ENCODE measurements at regions of chr3 and their contacts with region 1.

Region 1: GRCh38 chr3:133941415-133941821 is 45.7 kb upstream of the RAB6B start:
- DNase-seq: no peak
- H3K4me3 Mint-ChIP-seq: no peak overlapping the region
- H3K27ac Mint-ChIP-seq: no peak overlapping the region
- H3K4me1 Mint-ChIP-seq: peaks cover 20% of the 10 kb centered on the region
- H3K27me3 Mint-ChIP-seq: peaks cover 4% of the 10 kb centered on the region

Region 2: DNA sequence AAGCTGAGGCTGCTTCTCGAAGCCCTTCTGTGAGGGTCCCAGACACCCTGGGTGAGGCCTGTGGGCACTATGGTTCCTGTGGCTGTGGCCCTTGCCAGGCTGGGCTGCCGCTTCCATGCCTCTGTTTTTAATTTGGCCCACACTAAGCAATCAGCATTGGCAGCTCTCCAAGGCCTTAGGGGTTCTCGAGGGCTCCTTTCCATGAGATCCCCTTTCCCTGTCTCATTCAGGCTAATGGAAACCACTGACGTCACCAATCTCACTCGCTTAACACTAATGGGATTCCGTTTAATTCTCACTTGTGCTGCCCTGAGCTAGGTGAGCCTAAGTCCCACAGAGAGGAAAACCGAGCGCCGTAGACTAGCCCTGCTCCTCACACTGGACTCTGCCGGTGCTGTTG is 14.5 kb after region 1 on chr3:
- CTCF ChIA-PET with region 1: no interaction called
- POLR2A ChIA-PET with region 1: no interaction called
- DNase-seq: no peak
- H3K4me3 Mint-ChIP-seq: no peak overlapping the region
- H3K27ac Mint-ChIP-seq: no peak overlapping the region
- H3K4me1 Mint-ChIP-seq: no peaks in the 10 kb centered on the region
- H3K27me3 Mint-ChIP-seq: no peaks in the 10 kb centered on the region

Region 3: GRCh38 chr3:134059671-134060560 is 118.5 kb after region 1 on chr3:
- CTCF ChIA-PET with region 1: no interaction called
- POLR2A ChIA-PET with region 1: interaction called, 10 read pairs
- DNase-seq: no peak
- H3K4me3 Mint-ChIP-seq: no peak overlapping the region
- H3K27ac Mint-ChIP-seq: no peak overlapping the region
- H3K4me1 Mint-ChIP-seq: peaks cover 13% of the 10 kb centered on the region
- H3K27me3 Mint-ChIP-seq: no peaks in the 10 kb centered on the region

Region 4: DNA sequence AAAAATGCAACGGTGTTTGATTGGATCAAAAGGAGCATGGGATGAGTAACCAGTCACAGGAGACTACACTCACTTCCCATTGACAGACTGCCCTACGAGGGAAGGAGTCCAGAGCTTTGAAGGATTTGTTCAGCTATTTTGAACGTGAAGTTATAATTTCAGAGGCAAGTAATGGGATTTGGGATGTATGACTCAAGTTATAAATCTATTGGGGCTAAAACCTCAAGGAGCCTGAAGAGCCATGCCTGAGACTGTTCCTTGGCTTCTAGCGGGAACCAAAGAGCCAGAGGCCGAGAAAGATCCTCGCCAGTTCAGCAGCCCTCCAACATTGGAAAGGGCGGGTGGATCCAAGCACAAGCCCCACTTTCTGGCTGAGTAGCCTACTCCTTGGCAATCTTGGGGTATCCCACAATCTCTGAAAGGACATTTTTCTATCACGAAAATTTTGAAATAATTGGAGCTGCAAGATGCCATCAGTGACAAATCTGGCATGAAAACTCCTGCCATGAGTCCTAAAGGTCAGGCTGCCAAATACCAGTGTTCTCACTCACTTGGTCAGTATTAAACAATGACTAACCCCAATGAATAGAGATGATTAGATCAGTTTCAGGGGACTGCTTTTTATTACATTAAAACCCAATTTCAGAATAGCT is 136.9 kb after region 1 on chr3:
- CTCF ChIA-PET with region 1: no interaction called
- POLR2A ChIA-PET with region 1: no interaction called
- DNase-seq: no peak
- H3K4me3 Mint-ChIP-seq: no peak overlapping the region
- H3K27ac Mint-ChIP-seq: no peak overlapping the region
- H3K4me1 Mint-ChIP-seq: no peaks in the 10 kb centered on the region
- H3K27me3 Mint-ChIP-seq: peaks cover 6% of the 10 kb centered on the region

Measured in activated CD4-positive, alpha-beta T cell treated with anti-CD3 and anti-CD28 coated beads, Interleukin-2, amount 10 ng/mL, durations not matched to agents 7 days and 5 days (primary cell).